ENCODE measurements at regions of chr18 and their contacts with region 1.

Region 1: DNA sequence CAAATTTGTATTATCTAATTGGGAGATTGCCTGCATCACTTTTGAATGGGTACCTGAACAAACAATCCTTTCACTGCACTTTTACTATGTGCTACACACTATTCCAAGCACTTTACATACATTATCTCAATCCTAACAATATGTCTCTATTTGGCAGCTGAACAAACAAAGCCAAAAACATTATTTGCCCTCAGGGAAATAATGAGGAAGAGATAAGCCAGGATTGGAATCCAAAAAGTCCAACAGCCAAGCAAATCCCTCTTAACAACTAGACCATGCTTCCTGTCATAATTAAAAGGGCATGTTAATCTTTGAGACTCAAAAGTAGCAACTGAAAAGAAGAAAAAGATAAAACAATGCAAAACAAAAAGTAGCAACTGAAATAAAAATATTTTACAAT is 32.1 kb downstream of the RPRD1A start:
- DNase-seq: no peak
- H3K4me3 ChIP-seq: no peak overlapping the region
- H3K27ac ChIP-seq: no peak overlapping the region
- H3K27me3 ChIP-seq: no peaks in the 10 kb centered on the region
- CTCF ChIP-seq: no peak

Region 2: GRCh38 chr18:36015629-36016028 is 19.6 kb before region 1 on chr18:
- CTCF ChIA-PET with region 1: interaction called, 70 read pairs
- POLR2A ChIA-PET with region 1: no interaction called
- DNase-seq: no peak
- H3K4me3 ChIP-seq: no peak overlapping the region
- H3K27ac ChIP-seq: no peak overlapping the region
- H3K27me3 ChIP-seq: no peaks in the 10 kb centered on the region
- CTCF ChIP-seq: no peak

Measured in AG04450 (cell line).